ENCODE measurements at regions of chr15 and their contacts with region 1.

Region 1: DNA sequence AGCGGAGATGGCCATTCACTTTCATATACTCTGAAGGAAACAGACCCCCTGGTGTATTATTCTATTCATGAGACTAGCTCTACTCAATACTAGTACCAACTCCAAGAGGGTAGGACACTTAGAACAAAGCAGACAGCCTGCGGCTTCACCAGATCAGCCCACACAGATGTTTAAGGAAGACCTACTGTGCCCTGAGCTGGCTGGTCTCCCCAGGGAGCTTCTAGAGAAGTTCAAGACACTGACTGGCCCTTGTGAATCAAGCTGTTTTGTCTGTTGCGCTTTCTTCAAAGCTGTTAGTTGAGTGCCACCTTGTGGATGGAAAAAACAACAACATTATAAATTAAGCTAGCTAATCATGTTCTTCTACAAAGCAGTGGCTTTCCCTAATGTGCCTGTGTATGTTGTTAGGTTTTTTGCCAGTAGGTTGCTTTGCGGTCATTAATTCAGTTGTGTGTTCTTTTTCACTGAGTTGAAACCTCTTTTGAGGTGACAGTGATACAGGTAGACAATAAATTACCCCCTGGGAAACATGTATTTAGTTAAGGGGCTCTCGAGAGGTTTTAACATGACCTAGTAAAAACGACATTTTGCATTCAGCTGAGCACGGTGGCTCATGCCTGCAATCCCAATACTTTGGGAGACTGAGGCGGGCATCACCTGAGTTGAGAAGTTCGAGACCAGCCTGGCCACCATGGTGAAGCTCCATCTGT is 64.2 kb upstream of the MYZAP start:
- DNase-seq: no peak
- H3K4me3 ChIP-seq: no peak overlapping the region
- H3K27ac ChIP-seq: no peak overlapping the region
- H3K4me1 ChIP-seq: peaks cover 0 to 12% (median 6%) of the 10 kb centered on the region in 4 donors
- H3K27me3 ChIP-seq: no peaks in the 10 kb centered on the region
- CTCF ChIP-seq: peak; percentile 62 to 72 (median 70)
- EP300 ChIP-seq: no peak
- POLR2A ChIP-seq: no peak

Region 2: DNA sequence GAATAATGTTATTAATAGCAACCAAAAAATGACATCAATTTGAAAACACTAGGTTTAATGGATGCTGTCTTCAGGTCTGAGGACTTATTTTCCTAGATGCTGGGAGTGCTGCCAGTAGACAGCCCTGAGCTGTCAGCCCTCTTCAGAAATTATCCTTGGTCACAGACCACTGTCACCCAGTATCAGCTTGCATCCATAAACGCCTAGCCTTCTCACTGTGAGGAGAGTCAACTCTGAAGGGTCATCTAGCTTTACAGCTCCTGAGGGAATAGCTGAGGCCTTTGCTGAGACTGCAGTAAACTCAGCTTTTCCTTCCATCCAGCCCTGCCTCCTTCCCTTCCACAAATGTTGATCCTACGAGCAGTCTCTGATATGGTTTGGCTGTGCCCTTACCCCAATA is 1043.2 kb before region 1 on chr15:
- intact Hi-C with region 1: loop called (anchors 10 kb)
- DNase-seq: no peak
- H3K4me3 ChIP-seq: no peak overlapping the region
- H3K27ac ChIP-seq: no peak overlapping the region
- H3K4me1 ChIP-seq: no peaks in the 10 kb centered on the region
- H3K27me3 ChIP-seq: no peaks in the 10 kb centered on the region
- CTCF ChIP-seq: no peak
- EP300 ChIP-seq: no peak
- POLR2A ChIP-seq: no peak

Region 3: GRCh38 chr15:57340682-57341259 is 186.8 kb before region 1 on chr15:
- intact Hi-C with region 1: loop called (anchors 1 kb)
- DNase-seq: no peak
- H3K4me3 ChIP-seq: no peak overlapping the region
- H3K27ac ChIP-seq: no peak overlapping the region
- H3K4me1 ChIP-seq: peaks cover 9 to 10% (median 10%) of the 10 kb centered on the region in 4 donors
- H3K27me3 ChIP-seq: no peaks in the 10 kb centered on the region
- CTCF ChIP-seq: peak; percentile 85 to 90 (median 85)
- EP300 ChIP-seq: no peak
- POLR2A ChIP-seq: no peak

Region 4: GRCh38 chr15:57485869-57486268 is 41.7 kb before region 1 on chr15:
- intact Hi-C with region 1: no loop called
- DNase-seq: no peak
- H3K4me3 ChIP-seq: no peak overlapping the region
- H3K27ac ChIP-seq: no peak overlapping the region
- H3K4me1 ChIP-seq: no peaks in the 10 kb centered on the region
- H3K27me3 ChIP-seq: no peaks in the 10 kb centered on the region
- CTCF ChIP-seq: no peak
- EP300 ChIP-seq: no peak
- POLR2A ChIP-seq: no peak